Calu3 (cell line): ENCODE measurements at regions of chr6 and their contacts with region 1.

Region 1: DNA sequence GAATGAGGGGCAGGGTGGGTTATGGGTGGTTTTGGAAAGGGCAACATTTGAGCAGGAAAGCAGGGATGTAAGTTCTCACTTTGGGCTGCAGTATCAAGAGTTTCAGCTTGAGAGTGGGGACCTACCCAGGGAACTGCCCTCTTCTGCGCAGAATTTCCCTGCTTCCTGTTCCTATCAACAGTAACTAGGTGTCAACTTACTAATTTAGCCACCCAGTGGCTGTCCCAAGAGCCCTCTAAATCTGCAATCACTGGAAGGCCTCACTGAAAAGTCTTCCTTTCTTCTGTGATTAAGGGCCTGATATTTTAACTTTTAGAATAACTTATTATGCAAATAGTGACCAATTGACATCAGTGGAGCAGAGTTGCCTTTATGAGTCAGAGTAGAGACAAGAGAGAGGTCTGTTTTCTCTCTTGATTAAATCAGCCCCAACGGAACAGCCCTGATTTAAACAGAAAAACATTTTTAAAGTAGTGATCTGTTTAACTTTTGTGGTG is 118.2 kb upstream of the RIPOR2 start:
- DNase-seq: no peak
- H3K4me3 Mint-ChIP-seq: no peak overlapping the region
- H3K27ac Mint-ChIP-seq: no peak overlapping the region
- H3K4me1 Mint-ChIP-seq: peaks cover 12% of the 10 kb centered on the region
- H3K27me3 Mint-ChIP-seq: no peaks in the 10 kb centered on the region
- CTCF ChIP-seq: no peak

Region 2: DNA sequence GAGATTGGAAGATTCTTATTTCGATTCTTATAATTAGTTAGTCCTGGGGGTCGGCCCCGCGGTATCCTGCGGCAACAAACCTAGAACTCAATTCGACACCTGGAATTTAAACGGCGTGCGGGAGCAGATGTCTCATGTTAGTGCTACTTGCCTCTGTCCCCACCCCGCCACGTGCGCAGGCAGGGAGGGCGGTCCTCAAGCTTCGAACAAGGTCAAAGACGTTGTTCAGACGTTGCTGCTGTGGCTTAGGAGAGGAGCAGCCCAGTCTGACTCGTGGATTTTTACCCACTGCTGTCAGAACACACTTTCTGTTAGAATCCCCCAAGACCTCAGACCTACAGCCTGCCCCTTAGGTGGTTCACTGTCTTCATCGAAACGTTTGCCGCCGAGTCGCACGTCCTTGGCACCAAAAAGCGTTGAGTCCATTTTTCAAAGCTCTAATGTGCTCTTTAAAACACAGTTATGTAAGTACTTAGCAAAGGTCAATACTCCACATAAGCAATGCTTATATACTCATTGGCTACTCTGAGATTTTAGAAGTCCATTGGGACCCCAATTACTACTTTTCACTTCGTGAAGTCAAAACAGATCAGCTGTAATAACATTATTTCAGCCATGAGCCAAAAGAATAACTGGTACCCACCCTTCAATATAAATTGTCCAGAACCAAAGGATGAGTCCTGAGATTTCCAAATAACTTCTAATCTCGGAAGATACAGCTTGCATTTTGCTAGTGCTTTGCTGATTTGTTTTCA is 332.3 kb before region 1 on chr6:
- CTCF ChIA-PET with region 1: no interaction called
- intact Hi-C with region 1: no loop called
- DNase-seq: no peak
- H3K4me3 Mint-ChIP-seq: peak overlapping the region; percentile 97
- H3K27ac Mint-ChIP-seq: peak overlapping the region; percentile 94
- H3K4me1 Mint-ChIP-seq: peaks cover 20% of the 10 kb centered on the region
- H3K27me3 Mint-ChIP-seq: no peaks in the 10 kb centered on the region
- CTCF ChIP-seq: no peak

Region 3: DNA sequence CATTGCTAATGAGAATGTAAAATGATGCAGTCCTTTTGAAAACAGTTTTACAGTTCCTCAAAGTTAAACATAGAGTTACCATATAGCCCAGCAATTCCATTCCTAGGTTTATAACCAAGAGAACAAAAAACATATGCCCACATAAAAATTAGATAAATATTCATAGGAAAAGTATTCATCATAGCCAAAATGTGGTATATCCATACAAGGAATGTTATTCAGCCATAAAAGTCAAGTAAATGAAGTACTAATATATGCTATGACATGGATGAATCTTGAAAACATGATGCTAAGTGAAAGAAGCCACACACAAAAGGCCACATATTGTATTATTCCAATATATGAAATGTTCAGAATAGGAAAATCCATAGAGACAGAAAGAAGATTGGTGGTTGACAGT is 67.3 kb after region 1 on chr6:
- CTCF ChIA-PET with region 1: no interaction called
- intact Hi-C with region 1: loop called (anchors 2 kb)
- DNase-seq: no peak
- H3K4me3 Mint-ChIP-seq: no peak overlapping the region
- H3K27ac Mint-ChIP-seq: no peak overlapping the region
- H3K4me1 Mint-ChIP-seq: no peaks in the 10 kb centered on the region
- H3K27me3 Mint-ChIP-seq: peaks cover 16% of the 10 kb centered on the region
- CTCF ChIP-seq: no peak

Region 4: GRCh38 chr6:25232479-25232878 is 178.6 kb after region 1 on chr6:
- CTCF ChIA-PET with region 1: no interaction called
- intact Hi-C with region 1: no loop called
- DNase-seq: no peak
- H3K4me3 Mint-ChIP-seq: no peak overlapping the region
- H3K27ac Mint-ChIP-seq: no peak overlapping the region
- H3K4me1 Mint-ChIP-seq: peaks cover 33% of the 10 kb centered on the region
- H3K27me3 Mint-ChIP-seq: no peaks in the 10 kb centered on the region
- CTCF ChIP-seq: no peak